Calu3 (cell line): ENCODE measurements at regions of chr14 and their contacts with region 1.

Region 1: DNA sequence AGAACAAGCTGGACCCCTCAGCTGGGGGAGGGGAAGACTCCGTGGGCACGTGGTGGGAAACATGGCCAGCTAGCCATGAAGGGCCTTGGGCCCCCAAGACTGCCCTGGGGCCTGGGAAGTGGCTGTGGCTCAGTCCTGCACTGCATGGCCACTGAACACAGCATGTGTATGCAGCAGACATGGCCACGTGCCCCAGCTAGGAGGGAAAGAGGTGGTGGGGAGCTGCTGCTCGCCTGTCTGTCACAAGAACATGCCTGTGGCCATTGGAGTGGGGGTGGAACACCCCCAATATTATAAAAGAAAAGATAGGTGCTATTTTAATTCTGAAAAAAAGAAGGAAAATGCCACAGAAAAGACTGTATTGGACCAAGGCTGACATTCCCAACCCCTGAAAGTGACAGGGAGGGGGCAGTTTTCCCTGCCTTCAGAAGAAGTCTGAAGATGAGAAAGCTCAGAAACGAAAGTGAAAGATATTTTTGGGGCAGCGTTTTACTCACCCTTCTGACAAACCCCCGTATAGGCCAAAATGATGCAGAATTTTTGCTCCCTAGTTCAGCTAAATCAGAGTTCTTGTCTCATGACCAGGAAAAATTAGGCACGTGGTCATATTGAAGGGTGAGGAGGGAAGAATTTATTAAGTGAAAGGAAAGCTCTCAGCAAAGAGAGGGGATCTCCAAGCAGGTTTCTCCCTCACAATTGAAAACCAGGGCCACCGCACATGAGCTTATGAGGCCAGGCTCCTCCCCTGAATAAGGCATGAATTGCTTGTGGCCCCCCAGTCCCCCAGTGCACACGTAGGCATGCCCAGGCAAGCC is 35.2 kb upstream of the PCNX1 start:
- DNase-seq: no peak
- H3K4me3 Mint-ChIP-seq: no peak overlapping the region
- H3K27ac Mint-ChIP-seq: no peak overlapping the region
- H3K4me1 Mint-ChIP-seq: no peaks in the 10 kb centered on the region
- H3K27me3 Mint-ChIP-seq: no peaks in the 10 kb centered on the region
- CTCF ChIP-seq: no peak

Region 2: GRCh38 chr14:71221119-71221518 is 349.0 kb after region 1 on chr14:
- CTCF ChIA-PET with region 1: interaction called, 10 read pairs
- intact Hi-C with region 1: no loop called
- DNase-seq: no peak
- H3K4me3 Mint-ChIP-seq: no peak overlapping the region
- H3K27ac Mint-ChIP-seq: no peak overlapping the region
- H3K4me1 Mint-ChIP-seq: peaks cover 17% of the 10 kb centered on the region
- H3K27me3 Mint-ChIP-seq: no peaks in the 10 kb centered on the region
- CTCF ChIP-seq: no peak